ENCODE measurements at regions of chr2 and their contacts with region 1.

Region 1: GRCh38 chr2:75640621-75641121 is 5.9 kb upstream of the MRPL19 start:
- DNase-seq: peak; percentile 85
- H3K4me3 ChIP-seq: no peak overlapping the region
- H3K27ac ChIP-seq: no peak overlapping the region
- H3K4me1 ChIP-seq: peaks cover 8% of the 10 kb centered on the region
- H3K27me3 ChIP-seq: no peaks in the 10 kb centered on the region
- CTCF ChIP-seq: peak; percentile 99

Region 2: DNA sequence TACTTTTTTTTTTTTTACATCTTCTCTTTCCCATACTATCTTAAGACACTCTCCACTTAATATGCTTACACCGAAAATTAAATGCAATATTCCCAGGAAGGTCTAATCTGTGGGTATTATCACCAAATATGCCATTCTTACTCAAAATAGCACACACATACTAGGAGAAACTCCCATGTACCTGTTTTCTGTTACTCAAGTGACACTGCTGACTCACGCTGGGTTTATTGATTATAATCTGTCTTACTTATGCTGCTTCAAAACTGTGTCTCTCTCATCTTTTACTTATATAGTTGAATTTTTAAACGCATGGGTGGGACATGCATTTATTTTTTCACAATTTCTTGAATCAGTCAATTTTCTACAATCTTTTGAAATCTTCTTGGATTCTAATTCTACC is 35.8 kb after region 1 on chr2:
- CTCF ChIA-PET with region 1: no interaction called
- POLR2A ChIA-PET with region 1: no interaction called
- intact Hi-C with region 1: loop called (anchors 2 kb)
- DNase-seq: no peak
- H3K4me3 ChIP-seq: no peak overlapping the region
- H3K27ac ChIP-seq: no peak overlapping the region
- H3K4me1 ChIP-seq: no peaks in the 10 kb centered on the region
- H3K27me3 ChIP-seq: no peaks in the 10 kb centered on the region
- CTCF ChIP-seq: no peak

Region 3: GRCh38 chr2:75716406-75716805 is 75.7 kb after region 1 on chr2:
- CTCF ChIA-PET with region 1: interaction called, 8 read pairs
- POLR2A ChIA-PET with region 1: no interaction called
- intact Hi-C with region 1: loop called (anchors 5 kb)
- DNase-seq: peak; percentile 29
- H3K4me3 ChIP-seq: no peak overlapping the region
- H3K27ac ChIP-seq: no peak overlapping the region
- H3K4me1 ChIP-seq: no peaks in the 10 kb centered on the region
- H3K27me3 ChIP-seq: no peaks in the 10 kb centered on the region
- CTCF ChIP-seq: peak; percentile 41; the same call in 1 of the 2 replicates

Region 4: GRCh38 chr2:75928093-75928492 is 287.4 kb after region 1 on chr2:
- CTCF ChIA-PET with region 1: no interaction called
- POLR2A ChIA-PET with region 1: no interaction called
- intact Hi-C with region 1: no loop called
- DNase-seq: no peak
- H3K4me3 ChIP-seq: no peak overlapping the region
- H3K27ac ChIP-seq: no peak overlapping the region
- H3K4me1 ChIP-seq: no peaks in the 10 kb centered on the region
- H3K27me3 ChIP-seq: no peaks in the 10 kb centered on the region
- CTCF ChIP-seq: no peak